Panc1 (cell line): ENCODE measurements at regions of chr21 and their contacts with region 1.

Region 1: DNA sequence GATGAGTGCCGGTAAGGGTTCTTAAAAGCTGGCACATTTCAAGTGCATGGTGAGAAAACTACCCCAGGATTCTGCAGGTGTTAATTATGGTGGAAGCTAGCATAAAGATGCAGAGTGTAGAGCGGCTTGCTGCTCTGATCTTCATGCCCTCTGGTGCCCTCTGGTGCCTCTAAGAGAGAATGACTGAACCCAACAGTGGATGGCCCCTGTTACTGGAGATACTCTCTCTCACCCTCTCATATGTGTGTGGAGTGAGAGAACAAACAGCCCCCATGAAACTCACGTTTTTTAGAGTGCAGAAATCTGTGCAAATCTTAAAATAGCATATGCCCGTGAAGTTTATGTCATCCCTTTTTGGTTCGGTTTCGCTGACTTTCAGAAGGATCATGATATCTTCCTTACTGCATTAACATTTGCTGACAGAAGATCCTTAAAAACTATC is 90.0 kb downstream of the GRIK1 start:
- DNase-seq: peak; percentile 30
- ATAC-seq: peak; percentile 92
- H3K4me3 ChIP-seq: no peak overlapping the region
- H3K27ac ChIP-seq: no peak overlapping the region
- H3K4me1 ChIP-seq: no peaks in the 10 kb centered on the region
- H3K27me3 ChIP-seq: no peaks in the 10 kb centered on the region
- CTCF ChIP-seq: peak; percentile 79

Region 2: GRCh38 chr21:29477941-29478340 is 371.8 kb before region 1 on chr21:
- CTCF ChIA-PET with region 1: no interaction called
- POLR2A ChIA-PET with region 1: no interaction called
- in situ Hi-C with region 1: no loop called
- intact Hi-C with region 1: loop called (anchors 2 kb)
- DNase-seq: no peak
- ATAC-seq: no peak
- H3K4me3 ChIP-seq: no peak overlapping the region
- H3K27ac ChIP-seq: no peak overlapping the region
- H3K4me1 ChIP-seq: no peaks in the 10 kb centered on the region
- H3K27me3 ChIP-seq: no peaks in the 10 kb centered on the region
- CTCF ChIP-seq: no peak

Region 3: DNA sequence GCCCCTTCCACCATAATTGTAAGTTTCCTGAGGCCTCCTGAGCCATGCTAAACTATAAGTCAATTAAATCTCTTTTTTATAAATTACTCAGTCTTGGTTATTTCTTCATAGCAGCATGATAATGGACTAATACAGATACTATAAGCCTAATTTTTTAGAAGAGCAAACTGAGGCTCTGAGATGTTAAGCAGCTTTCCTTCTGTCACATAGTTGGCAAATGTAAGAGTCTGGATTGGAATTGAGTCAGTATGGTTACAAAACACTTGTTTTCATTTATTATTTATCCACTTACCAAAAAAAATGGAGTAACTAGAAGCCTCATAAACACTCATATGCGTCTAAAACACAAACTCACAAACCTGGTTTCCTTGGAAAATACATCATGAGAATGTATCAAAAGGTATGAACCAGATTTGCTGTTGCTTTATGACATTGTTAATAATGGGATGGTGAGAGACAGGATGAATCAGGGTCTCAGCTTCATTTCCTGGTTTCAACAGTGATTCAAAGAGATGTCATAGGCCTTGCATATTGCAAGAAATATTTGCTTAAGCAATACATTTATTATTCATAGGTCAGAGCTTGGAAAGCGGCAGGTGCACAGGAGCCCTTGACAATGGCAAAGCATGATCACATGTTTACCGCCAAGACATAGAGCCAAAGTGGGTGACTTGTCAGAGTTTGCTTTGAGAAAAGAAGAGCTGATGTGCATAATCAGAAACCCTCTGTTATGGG is 131.5 kb before region 1 on chr21:
- CTCF ChIA-PET with region 1: no interaction called
- POLR2A ChIA-PET with region 1: interaction called, 12 read pairs
- in situ Hi-C with region 1: no loop called
- intact Hi-C with region 1: no loop called
- DNase-seq: no peak
- ATAC-seq: no peak
- H3K4me3 ChIP-seq: no peak overlapping the region
- H3K27ac ChIP-seq: no peak overlapping the region
- H3K4me1 ChIP-seq: no peaks in the 10 kb centered on the region
- H3K27me3 ChIP-seq: no peaks in the 10 kb centered on the region
- CTCF ChIP-seq: no peak

Region 4: GRCh38 chr21:29870814-29871213 is 21.1 kb after region 1 on chr21:
- CTCF ChIA-PET with region 1: no interaction called
- POLR2A ChIA-PET with region 1: no interaction called
- in situ Hi-C with region 1: no loop called
- intact Hi-C with region 1: no loop called
- DNase-seq: no peak
- ATAC-seq: no peak
- H3K4me3 ChIP-seq: no peak overlapping the region
- H3K27ac ChIP-seq: no peak overlapping the region
- H3K4me1 ChIP-seq: no peaks in the 10 kb centered on the region
- H3K27me3 ChIP-seq: no peaks in the 10 kb centered on the region
- CTCF ChIP-seq: no peak